Activated CD4-positive, alpha-beta T cell treated with anti-CD3 and anti-CD28 coated beads, Interleukin-2, amount 10 ng/mL, durations not matched to agents 7 days and 5 days (primary cell): ENCODE measurements at regions of chr3 and their contacts with region 1.

Region 1: GRCh38 chr3:183410280-183410679 is 18.1 kb downstream of the MCF2L2 start:
- DNase-seq: no peak
- H3K4me3 Mint-ChIP-seq: no peak overlapping the region
- H3K27ac Mint-ChIP-seq: no peak overlapping the region
- H3K4me1 Mint-ChIP-seq: no peaks in the 10 kb centered on the region
- H3K27me3 Mint-ChIP-seq: peaks cover 2% of the 10 kb centered on the region

Region 2: DNA sequence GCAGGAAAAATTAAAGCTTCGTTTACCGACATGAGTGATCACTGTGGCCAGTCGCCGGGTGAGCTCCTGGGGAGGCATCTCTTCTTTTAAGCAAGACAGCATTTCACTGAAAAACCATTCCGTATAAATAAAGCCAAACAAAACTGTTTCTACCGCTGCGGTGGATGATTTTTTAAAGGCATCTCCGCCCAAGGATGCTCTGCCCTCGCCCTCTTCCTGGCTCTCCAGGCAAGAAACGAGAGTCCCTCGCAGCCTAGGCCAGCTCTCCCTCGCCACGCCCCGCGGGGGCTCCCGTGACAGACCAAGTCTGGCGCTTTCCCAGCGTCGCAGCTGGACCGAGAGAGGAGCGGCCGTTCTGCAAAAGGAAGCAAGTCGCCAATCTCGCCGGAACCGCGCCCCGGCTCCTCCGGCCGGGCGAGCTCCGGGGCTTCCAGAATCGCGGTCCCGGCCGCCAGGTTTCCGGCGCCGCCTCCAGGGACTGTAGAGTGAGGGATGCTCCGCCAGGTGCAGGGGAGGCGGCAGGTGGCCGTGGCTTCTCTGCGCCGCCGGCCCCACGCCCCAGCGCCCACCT is 17.7 kb after region 1 on chr3:
- CTCF ChIA-PET with region 1: interaction called, 11 read pairs
- POLR2A ChIA-PET with region 1: interaction called, 5 read pairs
- DNase-seq: peak; percentile 40
- H3K4me3 Mint-ChIP-seq: peak overlapping the region; percentile 74
- H3K27ac Mint-ChIP-seq: peak overlapping the region; percentile 77
- H3K4me1 Mint-ChIP-seq: peaks cover 41% of the 10 kb centered on the region
- H3K27me3 Mint-ChIP-seq: peaks cover 7% of the 10 kb centered on the region